IMR-90 (cell line): ENCODE measurements at regions of chrX and their contacts with region 1.

Region 1: GRCh38 chrX:95117556-95117955 is 1443.5 kb downstream of the FAM133A start:
- DNase-seq: no peak
- ATAC-seq: no peak
- H3K4me3 ChIP-seq: no peak overlapping the region
- H3K27ac ChIP-seq: no peak overlapping the region
- H3K4me1 ChIP-seq: no peaks in the 10 kb centered on the region
- H3K27me3 ChIP-seq: no peaks in the 10 kb centered on the region
- CTCF ChIP-seq: no peak
- POLR2A ChIP-seq: no peak
- RAD21 ChIP-seq: no peak

Region 2: DNA sequence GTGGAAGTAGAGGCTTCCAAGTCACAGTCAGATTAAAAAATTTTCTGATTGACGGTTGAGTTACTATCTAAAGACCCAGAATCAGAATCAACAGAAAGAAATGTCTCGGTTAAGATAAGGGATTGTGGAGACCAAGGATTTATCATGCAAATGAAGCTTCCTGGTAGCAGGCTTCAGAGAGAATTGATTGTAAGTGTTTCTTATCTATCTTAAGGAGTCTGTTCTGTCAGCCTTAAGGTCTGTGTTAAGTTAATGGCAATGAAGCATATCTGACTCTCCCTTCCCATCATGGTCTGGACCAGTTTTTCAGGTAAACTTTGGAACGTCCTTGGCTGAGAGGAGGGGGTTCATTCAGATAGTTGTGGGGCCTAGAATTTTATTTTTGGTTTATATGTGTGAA is 663.4 kb before region 1 on chrX:
- CTCF ChIA-PET with region 1: no interaction called
- POLR2A ChIA-PET with region 1: interaction called, 10 read pairs
- dilution Hi-C with region 1: no loop called
- in situ Hi-C with region 1: no loop called
- intact Hi-C with region 1: no loop called
- DNase-seq: no peak
- ATAC-seq: no peak
- H3K4me3 ChIP-seq: no peak overlapping the region
- H3K27ac ChIP-seq: no peak overlapping the region
- H3K4me1 ChIP-seq: no peaks in the 10 kb centered on the region
- H3K27me3 ChIP-seq: no peaks in the 10 kb centered on the region
- CTCF ChIP-seq: no peak
- POLR2A ChIP-seq: no peak
- RAD21 ChIP-seq: no peak